RWPE1 (cell line): ENCODE measurements at regions of chr4 and their contacts with region 1.

Region 1: GRCh38 chr4:56979421-56980072 is 851 bp downstream of the POLR2B start:
- DNase-seq: no peak
- H3K27ac ChIP-seq: peak overlapping the region; percentile 96
- CTCF ChIP-seq: no peak

Region 2: GRCh38 chr4:56937262-56937661 is 42.3 kb before region 1 on chr4:
- CTCF ChIA-PET with region 1: no interaction called
- POLR2A ChIA-PET with region 1: no interaction called
- DNase-seq: peak; percentile 78
- H3K27ac ChIP-seq: peak overlapping the region; percentile 83
- CTCF ChIP-seq: no peak

Region 3: GRCh38 chr4:56953680-56954520 is 25.6 kb before region 1 on chr4:
- CTCF ChIA-PET with region 1: no interaction called
- POLR2A ChIA-PET with region 1: no interaction called
- DNase-seq: no peak
- H3K27ac ChIP-seq: no peak overlapping the region
- CTCF ChIP-seq: no peak

Region 4: GRCh38 chr4:58776627-58777026 is 1797.1 kb after region 1 on chr4:
- CTCF ChIA-PET with region 1: no interaction called
- POLR2A ChIA-PET with region 1: interaction called, 14 read pairs
- DNase-seq: peak; percentile 67
- H3K27ac ChIP-seq: no peak overlapping the region
- CTCF ChIP-seq: no peak